Psoas muscle (tissue), 8 donors: ENCODE measurements at regions of chr3 and their contacts with region 1.

Region 1: DNA sequence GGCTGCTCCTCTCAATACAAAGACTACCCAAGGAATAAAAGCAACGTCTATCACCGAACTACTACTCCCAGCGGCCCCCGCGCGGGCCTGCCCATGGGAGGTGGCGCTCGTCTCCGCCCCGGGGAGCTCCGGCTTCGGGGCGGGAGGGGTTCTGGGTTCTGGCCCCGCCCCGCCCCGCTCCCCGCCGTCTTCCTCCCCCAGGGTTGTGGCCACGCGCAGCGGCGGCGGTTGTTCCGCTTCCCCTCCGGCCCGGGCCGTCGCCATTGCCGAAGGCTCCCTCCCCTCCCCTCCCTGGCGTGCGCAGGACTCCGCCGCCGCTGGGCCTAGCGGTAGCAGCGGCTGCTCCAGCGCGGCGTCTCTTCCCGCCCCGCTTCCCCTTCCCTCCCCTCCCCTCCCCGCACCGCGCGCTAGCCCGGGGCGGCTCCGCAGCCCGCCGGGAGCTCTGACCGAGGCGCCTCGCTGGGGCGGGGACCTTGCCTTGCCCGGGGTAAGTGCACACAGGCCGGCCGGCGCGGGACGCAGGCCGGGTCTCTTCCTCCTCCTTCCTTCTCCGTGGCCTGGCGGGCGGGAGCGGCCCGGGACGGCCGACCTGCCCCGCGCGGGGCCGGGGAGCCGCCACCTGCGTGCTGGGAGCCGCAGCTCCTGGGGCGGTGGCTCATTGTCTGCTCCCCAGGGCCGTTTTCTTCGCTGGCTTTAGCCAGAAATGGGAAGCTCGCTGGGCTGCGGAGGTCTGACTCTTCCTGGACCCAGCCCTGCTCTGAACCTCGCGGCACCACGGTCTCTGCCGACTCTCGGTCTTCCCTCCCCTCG is at the start of gene PAK2:
- DNase-seq: peak; percentile 93 to 96
- ATAC-seq: peak; percentile 95 to 97 (median 96)
- H3K4me3 ChIP-seq: peak within 1 kb of the TSS; percentile 78
- H3K27ac ChIP-seq: peak within 1 kb of the TSS; percentile 91
- H3K4me1 ChIP-seq: peaks cover 25% of the 10 kb centered on the region
- H3K27me3 ChIP-seq: no peaks in the 10 kb centered on the region
- CTCF ChIP-seq: no peak
- total RNA-seq, gene PAK2: 44.3 to 79.4 (median 58.3) TPM

Region 2: DNA sequence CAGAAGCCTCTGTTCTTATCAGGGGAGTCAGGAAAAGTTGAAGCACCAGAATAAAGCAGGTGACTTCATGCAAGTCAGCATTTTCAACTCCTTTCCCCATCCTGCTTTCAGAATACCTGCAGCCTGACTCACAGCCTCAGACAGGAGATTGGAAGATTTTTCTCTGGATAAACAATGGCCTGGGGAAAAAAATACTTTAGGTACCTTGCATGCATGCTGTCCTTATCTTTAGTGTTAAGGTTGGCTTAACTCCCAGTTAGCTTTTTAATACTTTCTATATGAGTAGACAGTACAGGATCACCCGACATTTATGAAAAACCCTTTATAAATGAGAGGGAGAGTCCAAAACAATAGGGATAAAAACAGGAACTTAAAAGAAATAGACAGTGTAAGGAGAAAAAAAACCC is 53.4 kb after region 1 on chr3:
- intact Hi-C with region 1: loop called in 1 of 2 experiments (anchors 10 kb)
- DNase-seq: no peak
- ATAC-seq: peak; percentile 64 to 80 (median 72)
- H3K4me3 ChIP-seq: no peak overlapping the region
- H3K27ac ChIP-seq: peak overlapping the region; percentile 37
- H3K4me1 ChIP-seq: peaks cover 18% of the 10 kb centered on the region
- H3K27me3 ChIP-seq: no peaks in the 10 kb centered on the region
- CTCF ChIP-seq: no peak

Region 3: DNA sequence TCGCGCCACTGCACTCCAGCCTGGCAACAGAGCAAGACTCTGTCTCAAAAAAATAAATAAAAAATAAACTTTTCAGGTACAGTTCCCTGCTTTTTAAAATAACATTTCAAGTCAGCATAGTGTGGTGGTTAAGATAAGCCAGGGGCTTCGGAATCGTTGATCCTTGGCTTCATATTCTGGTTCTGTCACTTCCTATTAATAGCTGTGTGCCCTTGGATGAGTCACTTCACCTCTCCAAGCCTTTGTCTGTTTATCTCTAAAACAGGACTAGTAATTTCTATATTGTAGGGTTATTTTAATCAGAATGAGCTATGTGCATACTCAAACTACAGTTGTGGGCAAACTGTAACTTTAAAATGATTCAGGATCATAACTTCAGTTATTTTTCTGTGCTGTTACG is 74.0 kb after region 1 on chr3:
- intact Hi-C with region 1: loop called in 1 of 2 experiments (anchors 10 kb)
- DNase-seq: no peak
- ATAC-seq: peak; percentile 93 to 96 (median 94)
- H3K4me3 ChIP-seq: no peak overlapping the region
- H3K27ac ChIP-seq: peak overlapping the region; percentile 70
- H3K4me1 ChIP-seq: peaks cover 12% of the 10 kb centered on the region
- H3K27me3 ChIP-seq: no peaks in the 10 kb centered on the region
- CTCF ChIP-seq: no peak

Region 4: DNA sequence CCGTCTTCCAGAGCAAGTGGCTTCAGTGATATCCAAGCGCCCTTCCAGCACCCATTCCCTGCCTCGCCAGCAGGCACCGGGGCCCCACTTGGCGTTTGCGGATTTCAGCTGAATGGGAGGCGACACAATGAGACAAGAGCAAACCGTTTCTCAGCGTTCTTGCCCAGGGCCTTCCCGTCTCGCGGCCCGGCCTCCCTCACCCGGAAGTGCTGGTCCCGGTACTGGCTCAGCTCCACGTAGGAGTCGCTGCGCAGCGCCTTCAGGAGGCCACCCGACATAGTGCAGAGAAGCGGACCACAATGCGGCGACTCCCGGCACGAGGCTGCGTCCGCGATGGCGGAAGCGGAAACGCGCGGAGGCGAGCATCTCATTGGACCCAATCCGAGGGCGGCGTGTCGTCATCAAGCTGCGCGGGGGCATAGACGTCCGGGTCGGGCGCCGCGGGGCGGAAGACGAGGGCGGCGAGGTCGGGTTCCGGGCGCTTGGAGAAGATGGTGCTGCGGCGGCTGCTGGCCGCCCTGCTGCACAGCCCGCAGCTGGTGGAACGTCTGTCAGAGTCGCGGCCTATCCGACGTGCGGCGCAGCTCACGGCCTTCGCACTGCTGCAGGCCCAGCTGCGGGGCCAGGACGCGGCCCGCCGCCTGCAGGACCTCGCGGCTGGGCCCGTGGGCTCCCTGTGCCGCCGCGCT is 202.5 kb after region 1 on chr3 and contains the start of gene NCBP2:
- intact Hi-C with region 1: loop called in 1 of 2 experiments (anchors 2 kb)
- DNase-seq: peak; percentile 99 to 100
- ATAC-seq: peak; percentile 96 to 98 (median 96)
- H3K4me3 ChIP-seq: peak within 1 kb of the TSS; percentile 95
- H3K27ac ChIP-seq: peak within 1 kb of the TSS; percentile 96
- H3K4me1 ChIP-seq: peaks cover 19% of the 10 kb centered on the region
- H3K27me3 ChIP-seq: no peaks in the 10 kb centered on the region
- CTCF ChIP-seq: peak; percentile 60
- total RNA-seq, gene NCBP2: 37.0 to 53.2 (median 48.7) TPM